ENCODE measurements at regions of chr16 and their contacts with region 1.

Region 1: DNA sequence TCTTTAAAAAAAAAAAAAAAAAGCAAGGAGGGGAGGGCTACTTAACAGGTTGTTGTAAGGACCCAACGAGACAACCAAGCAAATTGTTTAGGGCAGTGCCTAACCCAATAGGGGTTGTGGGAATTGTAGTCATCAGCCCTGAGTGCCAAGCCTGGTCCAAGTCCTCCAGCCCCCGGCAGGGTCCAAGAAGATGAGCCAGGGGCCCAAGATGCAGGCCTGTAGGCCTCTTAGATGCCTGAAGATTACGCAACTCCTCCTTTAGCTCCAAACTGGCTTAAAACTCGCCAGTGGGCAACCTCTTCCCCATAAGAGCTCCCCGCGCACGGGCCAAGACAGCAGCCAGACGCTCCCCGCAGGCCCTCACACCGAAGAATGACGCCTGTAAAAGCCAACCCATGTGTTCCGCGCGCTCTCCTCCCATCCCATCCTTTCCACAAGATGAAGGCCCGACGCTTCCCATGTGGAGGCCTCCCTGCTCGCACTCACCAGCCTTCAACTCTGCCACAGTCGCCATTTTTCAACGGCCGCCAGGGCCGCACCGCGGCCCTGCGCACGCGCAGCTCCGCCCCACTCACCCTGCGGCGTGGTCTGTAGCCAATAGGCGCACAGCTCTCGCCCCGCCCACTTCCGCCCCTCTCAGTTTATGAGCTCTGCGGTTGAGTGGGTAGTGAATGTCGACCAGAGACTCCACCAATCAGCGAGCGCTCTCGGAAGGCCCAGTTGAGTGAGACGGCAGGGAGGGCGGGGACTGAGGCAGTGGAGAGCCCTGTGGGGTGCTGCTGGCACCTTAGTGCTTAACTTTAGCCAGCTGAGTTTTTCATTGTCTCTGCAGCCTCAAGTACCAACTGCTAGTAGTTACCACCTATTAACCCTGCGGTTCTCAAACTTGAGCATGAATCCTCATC is at the start of gene CEP20:
- DNase-seq: peak; percentile 99
- H3K4me3 Mint-ChIP-seq: peak within 1 kb of the TSS; percentile 95
- H3K27ac Mint-ChIP-seq: peak within 1 kb of the TSS; percentile 94
- H3K4me1 Mint-ChIP-seq: peaks cover 27% of the 10 kb centered on the region
- H3K27me3 Mint-ChIP-seq: no peaks in the 10 kb centered on the region
- total RNA-seq, gene CEP20: 36.7 and 50.2 TPM in 2 replicates

Region 2: DNA sequence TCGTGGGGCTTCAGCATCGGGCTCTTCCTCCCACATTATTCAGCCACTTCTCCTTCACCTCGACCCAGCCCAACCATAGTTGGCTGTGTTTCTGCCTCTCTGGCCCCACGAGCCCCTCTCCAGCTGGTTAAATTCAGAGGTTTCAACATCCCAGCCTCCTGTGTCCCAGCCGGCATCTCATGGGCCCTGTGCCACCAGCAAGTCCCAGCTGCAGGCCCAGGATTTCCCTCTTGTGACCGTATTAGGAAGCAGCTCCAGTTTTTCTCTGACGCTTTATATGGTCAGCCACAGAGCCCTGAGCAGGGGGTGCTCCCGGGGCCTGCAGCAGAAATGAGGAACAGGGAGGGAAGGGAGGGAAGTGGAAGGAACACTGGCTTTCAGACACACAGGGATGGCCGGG is 58.9 kb before region 1 on chr16:
- intact Hi-C with region 1: no loop called
- DNase-seq: no peak
- H3K4me3 Mint-ChIP-seq: no peak overlapping the region
- H3K27ac Mint-ChIP-seq: no peak overlapping the region
- H3K4me1 Mint-ChIP-seq: no peaks in the 10 kb centered on the region
- H3K27me3 Mint-ChIP-seq: peaks cover 8% of the 10 kb centered on the region

Region 3: GRCh38 chr16:15899538-15900100 is 11.3 kb after region 1 on chr16:
- intact Hi-C with region 1: loop called (anchors 1 kb)
- DNase-seq: peak; percentile 54
- H3K4me3 Mint-ChIP-seq: peak overlapping the region; percentile 46
- H3K27ac Mint-ChIP-seq: peak overlapping the region; percentile 6
- H3K4me1 Mint-ChIP-seq: peaks cover 33% of the 10 kb centered on the region
- H3K27me3 Mint-ChIP-seq: peaks cover 4% of the 10 kb centered on the region

Region 4: DNA sequence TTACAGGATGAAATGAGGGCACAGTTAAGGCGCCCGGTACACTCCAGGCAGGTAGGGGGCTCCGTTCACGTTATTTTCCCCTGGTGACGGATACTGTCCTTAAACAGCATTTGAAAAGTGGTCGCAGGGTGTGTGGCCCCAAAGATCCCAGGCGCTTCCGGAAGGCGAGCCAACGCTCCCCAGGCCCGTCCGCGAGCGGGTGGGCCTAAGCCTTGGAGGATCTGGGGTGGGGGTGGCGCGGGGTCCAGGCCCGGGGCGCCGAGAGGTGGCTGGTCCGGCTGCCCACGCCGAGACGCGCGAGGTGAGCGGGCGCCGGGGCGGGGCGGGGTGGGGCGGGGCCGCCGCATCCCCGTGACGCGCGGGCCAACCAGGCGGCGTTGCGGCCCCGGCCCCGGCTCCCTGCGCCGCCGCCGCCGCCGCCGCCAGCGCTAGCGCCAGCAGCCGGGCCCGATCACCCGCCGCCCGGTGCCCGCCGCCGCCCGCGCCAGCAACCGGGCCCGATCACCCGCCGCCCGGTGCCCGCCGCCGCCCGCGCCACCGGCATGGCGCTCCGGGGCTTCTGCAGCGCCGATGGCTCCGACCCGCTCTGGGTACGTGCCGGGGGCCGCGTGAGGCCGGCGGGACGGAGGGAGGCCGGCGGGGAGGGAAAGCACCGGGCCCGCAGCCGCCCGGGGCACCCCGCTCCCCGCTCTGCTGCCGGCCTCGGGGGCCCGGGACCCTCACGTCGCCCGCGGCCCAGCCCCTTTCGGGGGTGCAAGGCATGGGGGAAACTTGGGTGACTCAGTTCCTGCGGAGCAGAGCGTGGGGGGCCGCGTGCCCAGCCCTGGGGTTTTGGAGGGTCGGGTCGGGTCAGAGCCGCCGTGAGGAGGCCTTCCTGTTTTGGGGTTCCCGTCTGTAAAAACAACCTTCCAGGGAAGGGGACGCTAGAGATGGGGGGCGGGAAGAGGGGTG is 61.2 kb after region 1 on chr16 and contains the start of gene ABCC1:
- intact Hi-C with region 1: loop called (anchors 1 kb)
- DNase-seq: peak; percentile 34
- H3K4me3 Mint-ChIP-seq: peak within 1 kb of the TSS; percentile 99
- H3K27ac Mint-ChIP-seq: peak within 1 kb of the TSS; percentile 100
- H3K4me1 Mint-ChIP-seq: peaks cover 62% of the 10 kb centered on the region
- H3K27me3 Mint-ChIP-seq: peaks cover 2% of the 10 kb centered on the region
- total RNA-seq, gene ABCC1: 102 and 108 TPM in 2 replicates

Region 5: GRCh38 chr16:15961060-15961511 is 72.8 kb after region 1 on chr16:
- intact Hi-C with region 1: loop called (anchors 1 kb)
- DNase-seq: peak; percentile 76
- H3K4me3 Mint-ChIP-seq: peak overlapping the region; percentile 47
- H3K27ac Mint-ChIP-seq: peak overlapping the region; percentile 95
- H3K4me1 Mint-ChIP-seq: peaks cover 63% of the 10 kb centered on the region
- H3K27me3 Mint-ChIP-seq: no peaks in the 10 kb centered on the region

Region 6: DNA sequence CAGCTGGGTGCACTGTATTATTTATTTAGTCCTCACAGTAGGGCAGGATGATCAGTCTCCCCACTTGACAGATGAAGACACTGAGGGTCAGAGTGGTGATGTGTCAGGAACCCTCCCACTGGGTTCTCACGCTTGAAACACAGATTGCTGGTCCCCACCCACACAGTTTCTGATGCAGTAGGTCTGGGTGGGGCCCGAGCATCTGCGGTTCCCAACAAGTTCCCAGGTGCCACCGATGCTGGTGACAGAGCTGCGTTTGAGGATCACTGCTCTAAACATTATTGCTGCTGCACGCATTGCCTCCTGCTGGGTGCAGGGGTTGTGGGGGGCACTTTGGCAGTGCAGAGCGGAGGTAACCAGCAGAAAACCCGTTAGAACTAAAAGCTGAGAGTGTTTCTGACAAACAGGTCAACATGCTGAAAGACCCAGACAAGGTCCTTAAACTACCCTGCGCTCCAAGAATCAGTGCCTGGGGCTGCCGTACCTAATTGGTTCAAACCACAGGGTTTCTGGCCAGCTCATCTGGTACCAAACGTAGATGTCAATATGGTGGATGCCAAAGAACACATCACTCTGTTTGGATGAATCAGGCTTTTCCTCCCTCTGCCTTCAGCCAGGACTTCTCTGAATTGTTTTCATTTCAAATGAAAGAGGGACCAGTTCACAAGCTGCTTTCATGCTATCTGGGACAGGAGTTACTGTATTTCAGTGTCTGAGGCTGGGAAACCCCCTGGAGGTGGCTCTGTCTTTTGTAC is 137.1 kb after region 1 on chr16:
- intact Hi-C with region 1: loop called (anchors 1 kb)
- DNase-seq: peak; percentile 48
- H3K4me3 Mint-ChIP-seq: peak overlapping the region; percentile 54
- H3K27ac Mint-ChIP-seq: peak overlapping the region; percentile 91
- H3K4me1 Mint-ChIP-seq: peaks cover 30% of the 10 kb centered on the region
- H3K27me3 Mint-ChIP-seq: no peaks in the 10 kb centered on the region

Region 7: DNA sequence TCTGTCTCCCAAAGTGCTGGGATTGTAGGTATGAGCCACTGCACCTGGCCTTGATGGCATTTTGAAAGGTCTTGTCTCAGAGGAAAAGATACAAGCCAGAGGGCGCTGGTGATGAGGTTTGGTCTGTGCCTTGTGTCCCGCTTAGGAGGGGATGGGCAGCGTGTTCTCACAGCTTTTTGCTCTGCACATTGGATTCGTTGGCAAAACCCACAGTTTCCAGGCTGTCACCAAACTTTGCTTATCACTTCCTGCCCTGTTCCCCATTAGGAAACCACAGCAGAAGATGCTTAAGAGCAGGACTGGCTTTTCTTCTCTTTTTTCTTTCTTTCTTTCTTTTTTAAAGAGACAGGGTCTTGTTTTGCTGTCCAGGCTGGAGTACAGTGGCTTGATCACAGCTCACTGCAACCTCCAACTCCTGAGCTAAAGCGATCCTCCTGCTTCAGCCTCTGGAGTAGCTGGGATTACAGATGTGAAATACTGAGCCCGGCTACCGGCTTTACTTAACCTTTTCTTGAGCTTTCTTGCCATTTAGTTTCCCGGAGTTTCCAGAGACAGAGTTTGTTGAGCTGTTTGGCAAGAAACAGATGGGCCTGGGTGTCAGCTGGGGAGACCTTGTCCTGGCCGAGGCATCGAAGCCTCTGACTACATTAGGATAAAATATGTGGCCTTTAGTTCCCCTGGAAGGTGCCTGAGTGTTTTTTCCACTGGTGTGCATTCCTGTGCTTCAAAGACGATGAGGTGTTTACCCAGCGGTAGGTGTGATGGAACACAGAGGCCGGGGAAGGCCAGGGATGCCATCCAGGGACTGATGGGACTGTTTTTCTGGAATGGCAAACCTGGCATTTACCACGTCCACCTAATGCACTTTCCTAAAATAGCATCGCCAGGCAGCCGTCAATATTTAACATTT is 174.0 kb after region 1 on chr16:
- intact Hi-C with region 1: loop called (anchors 5 kb)
- DNase-seq: peak; percentile 36
- H3K4me3 Mint-ChIP-seq: peak overlapping the region; percentile 16
- H3K27ac Mint-ChIP-seq: peak overlapping the region; percentile 31
- H3K4me1 Mint-ChIP-seq: peaks cover 27% of the 10 kb centered on the region
- H3K27me3 Mint-ChIP-seq: no peaks in the 10 kb centered on the region

Measured in activated T-helper 1 cell treated with anti-CD3 and anti-CD28 coated beads, Interleukin-12 subunit alpha, Interleukin-12 subunit beta, Interleukin-2, Interleukin-4 antibody, amounts not matched to agents 30 ng/mL and 10 ng/mL and 1 ng/mL, durations not matched to agents 14 hours and 24 hours and 36 hours (primary cell).